Activated CD4-positive, alpha-beta T cell treated with anti-CD3 and anti-CD28 coated beads for 36 hours (primary cell): ENCODE measurements at regions of chr1 and their contacts with region 1.

Region 1: GRCh38 chr1:50901872-50902271 is 58.2 kb downstream of the FAF1 start:
- DNase-seq: no peak
- ATAC-seq: no peak
- H3K4me3 Mint-ChIP-seq: no peak overlapping the region
- H3K27ac Mint-ChIP-seq: no peak overlapping the region
- H3K4me1 Mint-ChIP-seq: peaks cover 7% of the 10 kb centered on the region
- H3K27me3 Mint-ChIP-seq: no peaks in the 10 kb centered on the region

Region 2: GRCh38 chr1:50175719-50176639 is 725.9 kb before region 1 on chr1:
- CTCF ChIA-PET with region 1: no interaction called
- POLR2A ChIA-PET with region 1: no interaction called
- intact Hi-C with region 1: loop called in 1 of 2 experiments (anchors 10 kb)
- DNase-seq: no peak
- ATAC-seq: no peak
- H3K4me3 Mint-ChIP-seq: no peak overlapping the region
- H3K27ac Mint-ChIP-seq: no peak overlapping the region
- H3K4me1 Mint-ChIP-seq: no peaks in the 10 kb centered on the region
- H3K27me3 Mint-ChIP-seq: peaks cover 12% of the 10 kb centered on the region

Region 3: GRCh38 chr1:50644447-50645105 is 257.3 kb before region 1 on chr1:
- CTCF ChIA-PET with region 1: no interaction called
- POLR2A ChIA-PET with region 1: no interaction called
- intact Hi-C with region 1: no loop called
- DNase-seq: no peak
- ATAC-seq: no peak
- H3K4me3 Mint-ChIP-seq: no peak overlapping the region
- H3K27ac Mint-ChIP-seq: no peak overlapping the region
- H3K4me1 Mint-ChIP-seq: no peaks in the 10 kb centered on the region
- H3K27me3 Mint-ChIP-seq: no peaks in the 10 kb centered on the region

Region 4: GRCh38 chr1:50822035-50822776 is 79.7 kb before region 1 on chr1:
- CTCF ChIA-PET with region 1: no interaction called
- POLR2A ChIA-PET with region 1: no interaction called
- intact Hi-C with region 1: no loop called
- DNase-seq: no peak
- ATAC-seq: no peak
- H3K4me3 Mint-ChIP-seq: no peak overlapping the region
- H3K27ac Mint-ChIP-seq: no peak overlapping the region
- H3K4me1 Mint-ChIP-seq: peaks cover 4% of the 10 kb centered on the region
- H3K27me3 Mint-ChIP-seq: no peaks in the 10 kb centered on the region

Region 5: GRCh38 chr1:50981741-50982140 is 79.9 kb after region 1 on chr1:
- CTCF ChIA-PET with region 1: no interaction called
- POLR2A ChIA-PET with region 1: no interaction called
- intact Hi-C with region 1: no loop called
- DNase-seq: no peak
- ATAC-seq: no peak
- H3K4me3 Mint-ChIP-seq: no peak overlapping the region
- H3K27ac Mint-ChIP-seq: no peak overlapping the region
- H3K4me1 Mint-ChIP-seq: peaks cover 11% of the 10 kb centered on the region
- H3K27me3 Mint-ChIP-seq: peaks cover 22% of the 10 kb centered on the region